AG04450 (cell line): ENCODE measurements at regions of chr5 and their contacts with region 1.

Region 1: GRCh38 chr5:169302491-169303118 is 1.7 kb upstream of the SLIT3 start:
- DNase-seq: peak; percentile 55
- H3K4me3 ChIP-seq: no peak overlapping the region
- H3K27ac ChIP-seq: no peak overlapping the region
- H3K27me3 ChIP-seq: peaks cover 26% of the 10 kb centered on the region
- CTCF ChIP-seq: peak; percentile 93

Region 2: DNA sequence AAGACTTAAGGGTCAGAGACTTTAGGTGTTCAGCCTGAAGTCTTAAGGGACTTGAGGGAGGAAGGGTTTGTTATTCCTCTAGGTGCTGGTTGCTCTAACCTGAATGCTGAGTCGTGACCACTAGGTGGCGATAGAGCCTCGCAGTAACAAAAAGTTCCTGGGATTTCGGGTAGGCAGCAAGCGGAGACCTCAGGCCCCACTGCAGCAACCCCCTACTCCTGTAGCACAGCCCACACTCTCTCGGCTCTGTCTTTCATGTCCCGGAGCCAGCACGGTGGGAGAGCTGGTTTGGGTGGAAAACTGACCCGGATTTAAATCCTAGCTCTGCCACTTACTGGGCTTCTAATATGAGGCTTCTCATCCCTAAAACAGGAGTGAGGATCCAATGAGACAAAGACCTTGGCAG is 623.1 kb before region 1 on chr5:
- CTCF ChIA-PET with region 1: interaction called, 10 read pairs
- POLR2A ChIA-PET with region 1: no interaction called
- DNase-seq: peak; percentile 52
- H3K4me3 ChIP-seq: no peak overlapping the region
- H3K27ac ChIP-seq: no peak overlapping the region
- H3K27me3 ChIP-seq: no peaks in the 10 kb centered on the region
- CTCF ChIP-seq: peak; percentile 93